ENCODE measurements at regions of chr9 and their contacts with region 1.

Region 1: GRCh38 chr9:84397151-84397728 is 56.7 kb upstream of the SLC28A3 start:
- DNase-seq: peak; percentile 78
- H3K4me3 Mint-ChIP-seq: no peak overlapping the region
- H3K27ac Mint-ChIP-seq: no peak overlapping the region
- H3K4me1 Mint-ChIP-seq: no peaks in the 10 kb centered on the region
- H3K27me3 Mint-ChIP-seq: no peaks in the 10 kb centered on the region
- CTCF ChIP-seq: peak; percentile 87

Region 2: DNA sequence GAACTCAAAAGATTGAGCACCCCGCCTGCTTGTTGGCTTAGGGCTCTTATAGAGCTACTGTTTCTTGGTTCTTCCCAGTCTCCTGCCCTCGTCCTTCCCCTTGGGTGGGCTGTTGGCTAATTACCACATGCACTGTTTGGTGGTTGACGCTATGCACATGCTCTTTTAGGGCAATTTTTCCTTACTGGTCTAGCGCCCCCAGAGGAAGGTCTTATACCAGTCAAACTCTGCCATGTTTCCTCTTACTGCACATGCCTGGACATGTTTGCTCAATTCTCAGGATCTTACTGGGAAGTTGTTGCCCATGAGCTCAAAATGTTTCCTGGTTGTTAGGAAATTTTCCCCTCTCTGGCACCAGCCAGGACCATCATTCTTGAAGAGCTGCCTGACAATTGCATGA is 158.6 kb before region 1 on chr9:
- CTCF ChIA-PET with region 1: no interaction called
- POLR2A ChIA-PET with region 1: no interaction called
- intact Hi-C with region 1: no loop called
- DNase-seq: peak; percentile 26
- H3K4me3 Mint-ChIP-seq: no peak overlapping the region
- H3K27ac Mint-ChIP-seq: peak overlapping the region; percentile 89
- H3K4me1 Mint-ChIP-seq: no peaks in the 10 kb centered on the region
- H3K27me3 Mint-ChIP-seq: no peaks in the 10 kb centered on the region
- CTCF ChIP-seq: peak; percentile 24

Region 3: DNA sequence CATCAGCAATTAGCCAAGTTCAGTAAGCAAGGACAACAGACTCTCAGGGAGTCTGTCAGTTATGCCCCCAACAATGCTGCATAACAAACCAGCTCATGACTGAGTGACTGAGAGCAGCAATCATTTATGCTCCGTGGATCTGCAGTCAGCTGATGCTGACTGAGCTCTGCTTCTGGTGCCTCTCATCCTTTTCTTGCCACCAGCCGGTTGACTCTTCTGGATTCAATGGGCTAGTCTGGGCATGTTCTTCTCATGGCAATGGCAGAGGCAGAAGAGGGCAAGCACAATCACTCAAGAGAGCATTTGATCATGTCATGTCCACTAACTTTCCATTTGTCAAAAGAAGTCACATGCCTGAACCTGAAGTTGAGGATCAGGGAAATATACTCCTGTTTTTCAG is 115.3 kb after region 1 on chr9:
- CTCF ChIA-PET with region 1: interaction called, 12 read pairs
- POLR2A ChIA-PET with region 1: no interaction called
- intact Hi-C with region 1: no loop called
- DNase-seq: peak; percentile 29
- H3K4me3 Mint-ChIP-seq: no peak overlapping the region
- H3K27ac Mint-ChIP-seq: peak overlapping the region; percentile 73
- H3K4me1 Mint-ChIP-seq: peaks cover 21% of the 10 kb centered on the region
- H3K27me3 Mint-ChIP-seq: no peaks in the 10 kb centered on the region
- CTCF ChIP-seq: no peak

Region 4: GRCh38 chr9:84697509-84698114 is 300.4 kb after region 1 on chr9:
- CTCF ChIA-PET with region 1: interaction called, 42 read pairs
- POLR2A ChIA-PET with region 1: no interaction called
- intact Hi-C with region 1: loop called (anchors 1 kb)
- DNase-seq: peak; percentile 71
- H3K4me3 Mint-ChIP-seq: no peak overlapping the region
- H3K27ac Mint-ChIP-seq: no peak overlapping the region
- H3K4me1 Mint-ChIP-seq: peaks cover 5% of the 10 kb centered on the region
- H3K27me3 Mint-ChIP-seq: no peaks in the 10 kb centered on the region
- CTCF ChIP-seq: peak; percentile 67

Region 5: GRCh38 chr9:84947363-84947972 is 550.2 kb after region 1 on chr9:
- CTCF ChIA-PET with region 1: interaction called, 10 read pairs
- POLR2A ChIA-PET with region 1: interaction called, 3 read pairs
- intact Hi-C with region 1: no loop called
- DNase-seq: peak; percentile 91
- H3K4me3 Mint-ChIP-seq: no peak overlapping the region
- H3K27ac Mint-ChIP-seq: peak overlapping the region; percentile 82
- H3K4me1 Mint-ChIP-seq: peaks cover 14% of the 10 kb centered on the region
- H3K27me3 Mint-ChIP-seq: no peaks in the 10 kb centered on the region
- CTCF ChIP-seq: no peak

Region 6: DNA sequence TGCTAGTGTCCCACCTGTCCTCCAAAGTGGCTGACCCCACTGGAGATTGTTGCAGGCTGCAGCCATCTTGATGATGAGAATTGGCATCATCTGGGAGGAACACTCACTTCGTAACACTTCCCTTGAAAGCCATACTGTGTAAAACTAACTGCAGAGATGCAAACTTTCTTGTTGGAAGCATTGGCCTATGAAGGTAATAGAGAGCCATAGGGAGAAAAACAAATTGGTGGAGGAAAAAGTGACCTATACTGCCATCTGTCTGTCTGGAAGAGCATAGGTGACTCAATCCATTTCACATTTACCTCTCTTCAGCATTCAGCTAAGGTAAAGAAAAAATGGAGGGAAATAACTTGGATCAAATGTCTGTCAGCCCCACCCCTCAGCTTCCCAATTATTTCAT is 745.7 kb after region 1 on chr9:
- CTCF ChIA-PET with region 1: interaction called, 44 read pairs
- POLR2A ChIA-PET with region 1: interaction called, 3 read pairs
- intact Hi-C with region 1: loop called (anchors 2 kb)
- DNase-seq: peak; percentile 37
- H3K4me3 Mint-ChIP-seq: no peak overlapping the region
- H3K27ac Mint-ChIP-seq: no peak overlapping the region
- H3K4me1 Mint-ChIP-seq: peaks cover 15% of the 10 kb centered on the region
- H3K27me3 Mint-ChIP-seq: no peaks in the 10 kb centered on the region
- CTCF ChIP-seq: peak; percentile 50

Region 7: DNA sequence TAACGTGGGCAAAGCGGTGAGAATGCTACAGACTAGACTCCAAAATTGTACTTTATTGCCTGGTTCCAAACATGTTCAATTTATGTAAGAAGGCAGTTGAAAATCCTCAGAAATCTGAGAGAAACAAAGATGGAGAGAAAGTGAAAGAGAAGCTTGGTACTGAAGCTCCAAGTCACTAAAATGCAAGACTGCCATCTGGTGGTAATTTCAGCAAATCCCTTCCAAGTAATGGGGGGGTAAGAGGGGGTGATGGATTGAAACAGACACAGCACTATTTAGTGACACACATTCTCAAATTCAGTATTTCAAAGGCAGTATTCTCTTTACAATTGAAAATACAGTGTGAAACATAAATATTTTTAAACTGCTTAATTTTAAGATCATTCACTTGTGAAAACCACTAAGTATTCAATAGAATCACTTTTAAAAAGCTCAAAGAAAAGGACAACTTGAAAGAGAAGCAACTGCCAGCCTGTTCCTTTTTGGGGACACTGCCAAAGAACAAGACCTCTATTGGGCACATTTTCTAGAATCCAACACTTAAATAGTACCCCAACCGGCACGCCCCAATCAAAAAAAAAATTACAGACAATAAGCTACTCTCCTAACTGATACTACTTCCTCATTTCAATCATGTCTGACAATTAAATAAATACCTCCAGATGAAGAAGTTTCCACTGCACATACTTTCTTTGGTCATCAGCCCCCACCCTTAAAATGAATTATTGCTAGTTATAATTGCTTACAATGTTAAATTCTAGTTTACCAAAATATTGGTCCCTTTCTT is 1213.0 kb after region 1 on chr9:
- CTCF ChIA-PET with region 1: interaction called, 22 read pairs
- POLR2A ChIA-PET with region 1: interaction called, 13 read pairs
- intact Hi-C with region 1: loop called (anchors 1 kb)
- DNase-seq: peak; percentile 78
- H3K4me3 Mint-ChIP-seq: peak overlapping the region; percentile 69
- H3K27ac Mint-ChIP-seq: peak overlapping the region; percentile 61
- H3K4me1 Mint-ChIP-seq: peaks cover 6% of the 10 kb centered on the region
- H3K27me3 Mint-ChIP-seq: no peaks in the 10 kb centered on the region
- CTCF ChIP-seq: peak; percentile 61

Measured in MCF 10A (cell line).